ENCODE measurements at regions of chr11 and their contacts with region 1.

Region 1: GRCh38 chr11:90453525-90453924 is 230.7 kb upstream of the CHORDC1 start:
- DNase-seq: no peak
- ATAC-seq: no peak
- H3K4me3 ChIP-seq: no peak overlapping the region
- H3K27ac ChIP-seq: no peak overlapping the region
- H3K4me1 ChIP-seq: peaks cover 0 to 3% of the 10 kb centered on the region in 2 donors
- H3K27me3 ChIP-seq: no peaks in the 10 kb centered on the region

Region 2: DNA sequence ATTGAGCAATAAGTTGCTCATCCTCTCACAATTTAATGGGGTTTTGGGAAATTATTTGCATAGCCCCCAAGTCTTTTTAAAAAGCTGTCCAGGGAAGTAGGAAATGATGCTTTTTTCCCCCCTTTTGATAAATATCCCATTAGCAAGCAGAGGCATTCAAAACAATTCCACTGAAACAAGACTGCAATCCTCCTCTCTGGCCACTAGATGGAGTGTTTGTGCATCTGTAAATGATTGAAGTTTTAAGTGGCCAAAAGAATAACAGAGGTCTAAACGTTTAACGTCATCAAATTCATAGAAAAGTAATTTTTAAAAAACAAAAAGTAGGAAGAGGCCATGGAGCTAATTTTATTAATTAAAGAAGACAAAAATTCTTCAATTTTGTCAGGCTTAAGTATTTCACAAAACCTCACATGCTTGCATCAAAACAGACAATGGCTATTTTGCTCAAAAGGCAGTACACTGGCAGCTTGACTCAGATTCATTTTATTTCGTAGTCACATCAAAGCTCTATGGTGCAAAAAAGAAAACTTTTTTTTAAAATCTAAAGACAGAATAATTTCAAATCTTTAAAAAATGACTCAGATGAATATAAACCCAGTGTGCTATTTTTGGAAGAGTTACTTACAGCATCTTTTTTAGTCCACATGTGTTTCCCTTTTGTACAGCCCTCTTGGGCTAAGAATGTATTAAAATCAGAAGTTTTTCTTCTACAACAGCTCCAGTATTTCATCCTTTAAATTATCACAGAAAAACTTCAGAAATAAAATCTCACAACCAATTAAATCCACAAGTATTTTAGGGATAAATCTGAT is 248.5 kb before region 1 on chr11:
- intact Hi-C with region 1: loop called in 1 of 2 experiments (anchors 10 kb)
- DNase-seq: no peak
- ATAC-seq: no peak
- H3K4me3 ChIP-seq: no peak overlapping the region
- H3K27ac ChIP-seq: no peak overlapping the region
- H3K4me1 ChIP-seq: no peaks in the 10 kb centered on the region
- H3K27me3 ChIP-seq: no peaks in the 10 kb centered on the region

Region 3: DNA sequence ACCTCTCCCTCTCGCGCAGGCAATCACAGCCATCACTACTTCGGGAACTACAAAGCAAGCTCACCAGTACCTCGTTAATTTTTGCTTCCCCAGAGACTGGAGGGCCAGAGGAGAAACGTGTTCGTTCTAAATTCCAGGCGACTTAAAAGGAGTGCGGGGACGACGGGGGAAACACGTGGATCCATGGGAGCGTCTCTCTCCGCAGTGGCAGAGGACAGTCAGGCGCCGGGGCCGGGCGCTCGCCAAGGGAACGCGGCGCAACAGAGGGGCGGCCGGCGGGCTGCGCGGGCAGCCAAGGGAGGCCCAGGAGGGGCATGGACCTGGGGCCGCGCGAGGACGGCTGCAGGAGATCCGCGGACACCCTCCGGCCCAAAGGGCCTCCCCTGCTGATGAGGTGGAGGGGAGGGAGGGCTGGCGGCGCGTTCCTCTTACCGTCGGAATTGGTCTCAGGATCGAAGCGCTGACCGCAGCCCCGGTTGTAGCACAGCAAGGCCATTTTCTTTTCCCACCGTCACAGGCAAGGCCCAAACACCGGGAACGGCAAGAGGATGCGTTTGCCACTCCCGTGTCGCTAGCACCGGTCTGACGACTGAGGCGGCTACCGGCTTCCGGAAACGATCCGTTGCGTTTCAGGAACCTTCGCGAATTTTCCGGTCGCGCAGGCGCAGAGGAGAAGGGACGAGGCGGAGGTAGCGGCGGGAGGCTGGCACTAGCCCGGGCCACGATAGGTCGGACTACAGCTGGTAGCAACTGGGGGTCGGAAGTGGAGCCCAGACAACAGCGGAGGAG is 230.9 kb before region 1 on chr11 and contains the start of gene CHORDC1:
- intact Hi-C with region 1: loop called in 1 of 2 experiments (anchors 10 kb)
- DNase-seq: peak; percentile 95 to 98
- ATAC-seq: peak; percentile 97
- H3K4me3 ChIP-seq: peak within 1 kb of the TSS; percentile 73 to 95
- H3K27ac ChIP-seq: peak within 1 kb of the TSS; percentile 50 to 55
- H3K4me1 ChIP-seq: peaks cover 2 to 9% of the 10 kb centered on the region in 2 donors
- H3K27me3 ChIP-seq: no peaks in the 10 kb centered on the region
- total RNA-seq, gene CHORDC1: 38.8 to 54.2 TPM

Region 4: GRCh38 chr11:90288212-90288821 is 165.2 kb before region 1 on chr11:
- intact Hi-C with region 1: loop called (anchors 2 kb)
- DNase-seq: no peak
- ATAC-seq: no peak
- H3K4me3 ChIP-seq: no peak overlapping the region
- H3K27ac ChIP-seq: no peak overlapping the region
- H3K4me1 ChIP-seq: no peaks in the 10 kb centered on the region
- H3K27me3 ChIP-seq: no peaks in the 10 kb centered on the region